ENCODE measurements at regions of chr14 and their contacts with region 1.

Region 1: GRCh38 chr14:96109596-96110355 is 70.6 kb downstream of the C14orf132 start:
- DNase-seq: no peak
- H3K4me3 ChIP-seq: no peak overlapping the region
- CTCF ChIP-seq: no peak

Region 2: GRCh38 chr14:96083667-96084320 is 26.0 kb before region 1 on chr14:
- in situ Hi-C with region 1: no loop called
- DNase-seq: no peak
- H3K4me3 ChIP-seq: no peak overlapping the region
- CTCF ChIP-seq: no peak

Region 3: GRCh38 chr14:96136352-96137005 is 26.7 kb after region 1 on chr14:
- in situ Hi-C with region 1: no loop called
- DNase-seq: peak; percentile 42
- H3K4me3 ChIP-seq: no peak overlapping the region
- CTCF ChIP-seq: no peak

Region 4: DNA sequence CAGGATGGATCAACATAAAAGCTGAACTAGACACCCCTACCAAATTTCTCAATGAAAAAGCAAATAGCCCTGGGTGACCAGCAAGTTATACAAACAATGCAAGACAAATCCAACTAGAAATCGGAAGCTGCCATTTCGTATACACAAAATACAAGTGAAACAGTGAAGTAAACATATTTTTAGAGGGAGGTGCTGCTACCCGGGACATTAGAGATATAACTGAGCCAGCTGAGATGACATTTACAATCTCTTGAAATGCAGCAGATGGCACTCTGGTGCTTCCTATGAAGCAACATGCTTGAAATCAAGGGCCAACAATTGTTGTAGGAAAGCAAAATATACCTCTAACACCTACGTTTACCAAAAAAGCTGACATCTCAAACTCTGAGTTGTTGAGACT is 171.7 kb after region 1 on chr14:
- in situ Hi-C with region 1: loop called (anchors 5 kb)
- DNase-seq: no peak
- H3K4me3 ChIP-seq: no peak overlapping the region
- CTCF ChIP-seq: no peak

Measured in astrocyte of the cerebellum (primary cell).